ENCODE measurements at regions of chr6 and their contacts with region 1.

Region 1: GRCh38 chr6:34154668-34155447 is 9.0 kb upstream of the GRM4 start:
- DNase-seq: peak in 1 of 2 donors; percentile 89
- H3K4me3 ChIP-seq: no peak overlapping the region
- CTCF ChIP-seq: no peak
- POLR2A ChIP-seq: no peak

Region 2: DNA sequence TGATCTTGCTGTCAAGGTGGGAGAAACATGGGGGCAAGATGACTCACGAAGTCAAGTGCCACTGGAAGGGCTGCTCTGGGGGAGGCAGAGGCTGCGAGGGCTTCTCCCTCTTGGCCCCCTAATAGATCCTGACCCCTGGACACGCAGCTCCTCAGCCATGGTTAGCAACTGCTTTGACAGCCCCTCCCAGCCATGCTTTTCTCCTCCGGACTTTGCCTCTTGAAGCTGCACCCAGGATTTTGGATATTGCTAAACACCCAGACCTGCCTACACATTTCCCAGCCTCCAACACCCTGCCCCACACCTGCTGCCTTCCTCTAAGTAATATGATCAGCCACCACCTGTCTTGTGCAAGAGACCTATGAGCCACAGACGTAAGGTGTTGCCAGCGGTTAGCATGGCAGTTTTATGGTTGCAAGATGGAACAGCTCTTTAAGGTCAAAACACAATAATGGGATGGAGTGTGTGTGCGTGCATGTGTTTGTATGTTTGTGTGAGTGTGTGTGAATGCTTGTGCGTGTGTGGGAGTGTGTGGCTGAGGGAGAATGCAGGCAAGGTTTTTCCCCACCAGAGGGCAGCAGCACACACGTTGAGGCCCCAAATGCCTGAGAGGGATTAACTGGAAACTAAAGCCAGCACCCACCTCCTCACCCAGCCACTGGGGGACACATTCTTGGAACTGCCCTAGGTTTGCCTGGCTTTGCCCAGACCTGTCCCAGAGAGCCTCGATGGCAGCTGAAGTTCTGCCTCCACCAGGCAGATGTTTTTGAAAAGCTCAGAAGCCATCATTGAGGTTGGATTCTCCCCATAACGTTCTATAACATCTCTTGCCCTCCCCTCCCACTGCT is 410.6 kb before region 1 on chr6:
- intact Hi-C with region 1: loop called (anchors 10 kb)
- DNase-seq: peak; percentile 54 to 91
- H3K4me3 ChIP-seq: no peak overlapping the region
- CTCF ChIP-seq: peak in 1 of 3 donors; percentile 80
- POLR2A ChIP-seq: no peak

Region 3: DNA sequence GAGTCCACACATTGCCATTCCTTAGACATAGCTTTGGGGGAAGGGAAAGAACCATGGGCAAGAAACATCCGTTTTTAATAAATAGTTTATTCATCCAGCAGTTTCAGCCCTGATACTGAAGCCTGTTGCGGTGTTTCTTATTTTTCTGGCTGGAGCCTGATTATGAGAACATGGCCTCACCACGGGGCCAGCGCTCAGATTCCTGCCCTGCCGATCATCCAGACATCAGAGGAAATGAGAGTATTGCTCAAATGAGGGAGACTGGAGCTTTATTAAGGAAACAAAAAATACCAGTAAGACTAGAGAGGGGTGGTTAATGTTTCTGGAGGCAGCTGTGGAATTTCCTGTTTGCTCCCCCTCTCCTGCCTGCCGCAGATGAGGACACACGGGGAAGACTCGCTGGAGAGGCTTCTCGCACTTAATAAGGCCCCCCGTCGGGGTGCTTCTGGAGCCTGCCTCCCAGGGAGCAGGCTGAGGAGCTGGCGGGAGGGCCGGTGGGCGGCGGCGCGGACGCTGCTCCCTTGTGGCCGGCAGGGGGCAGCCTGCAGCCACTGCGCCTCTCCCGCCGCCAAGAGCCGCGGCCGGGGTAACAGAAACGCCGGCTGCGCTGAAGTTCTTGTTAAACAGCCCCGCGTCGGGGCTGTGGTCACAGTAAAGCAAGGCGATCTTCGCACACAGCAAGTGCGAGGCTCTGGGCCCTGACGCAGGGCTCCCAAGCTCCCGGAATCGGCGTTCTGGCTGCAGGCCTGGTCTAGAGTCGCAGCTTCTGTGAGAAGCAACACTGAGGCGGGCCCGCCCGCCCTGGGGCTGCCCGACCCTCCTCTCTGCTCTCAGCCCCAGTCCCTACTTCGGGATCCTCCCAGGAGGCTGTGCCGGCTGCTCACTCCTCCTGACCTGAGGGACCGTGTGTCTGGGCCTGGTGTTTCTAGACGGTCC is 383.4 kb before region 1 on chr6:
- intact Hi-C with region 1: loop called (anchors 10 kb)
- DNase-seq: peak; percentile 47 to 94
- H3K4me3 ChIP-seq: no peak overlapping the region
- CTCF ChIP-seq: peak in 1 of 3 donors; percentile 67
- POLR2A ChIP-seq: no peak

Region 4: DNA sequence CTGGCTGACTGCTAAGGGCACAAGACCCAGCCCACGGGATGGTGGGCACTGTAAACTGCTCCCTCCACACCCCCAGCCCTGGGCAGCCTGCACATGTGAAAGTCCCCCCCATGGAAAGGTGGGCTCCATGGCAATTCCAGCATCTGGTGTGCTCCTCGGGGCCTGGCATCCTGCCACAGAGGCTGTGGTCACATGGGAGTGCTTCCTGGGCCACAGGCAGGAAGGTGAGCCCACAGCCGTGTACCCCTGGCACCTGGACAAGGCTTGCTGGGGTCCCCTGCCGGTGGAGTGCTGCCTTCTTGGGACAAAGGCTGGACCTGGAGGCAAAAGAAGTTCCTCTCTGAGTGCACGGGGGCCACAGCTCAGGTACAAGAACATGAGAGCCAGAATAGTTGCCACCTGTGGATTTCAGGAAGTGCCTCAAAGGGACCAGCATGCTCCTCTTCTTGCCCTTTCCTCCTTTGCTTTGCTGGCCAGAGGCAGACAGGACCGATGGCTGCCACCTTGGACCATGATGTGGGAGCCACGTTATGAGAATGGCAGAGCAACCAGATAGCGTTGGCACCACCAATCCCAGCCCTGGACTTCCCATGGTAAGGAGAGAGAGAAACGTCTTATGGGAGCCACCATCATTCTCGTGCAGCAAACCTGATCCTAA is 230.9 kb before region 1 on chr6:
- intact Hi-C with region 1: no loop called
- DNase-seq: no peak
- H3K4me3 ChIP-seq: no peak overlapping the region
- CTCF ChIP-seq: no peak
- POLR2A ChIP-seq: no peak

Measured in lower leg skin (tissue), 4 donors.